Activated CD4-positive, alpha-beta memory T cell treated with anti-CD3 and anti-CD28 coated beads, Interleukin-2, amount 10 ng/mL, durations not matched to agents 7 days and 5 days (primary cell): ENCODE measurements at regions of chr7 and their contacts with region 1.

Region 1: GRCh38 chr7:108497082-108497725 is 28.7 kb downstream of the PNPLA8 start:
- DNase-seq: peak; percentile 35
- H3K4me3 Mint-ChIP-seq: no peak overlapping the region
- H3K27ac Mint-ChIP-seq: no peak overlapping the region
- H3K4me1 Mint-ChIP-seq: no peaks in the 10 kb centered on the region
- H3K27me3 Mint-ChIP-seq: no peaks in the 10 kb centered on the region

Region 2: GRCh38 chr7:108181073-108181985 is 315.9 kb before region 1 on chr7:
- CTCF ChIA-PET with region 1: interaction called, 10 read pairs
- POLR2A ChIA-PET with region 1: no interaction called
- DNase-seq: no peak
- H3K4me3 Mint-ChIP-seq: no peak overlapping the region
- H3K27ac Mint-ChIP-seq: no peak overlapping the region
- H3K4me1 Mint-ChIP-seq: no peaks in the 10 kb centered on the region
- H3K27me3 Mint-ChIP-seq: peaks cover 6% of the 10 kb centered on the region

Region 3: GRCh38 chr7:108452722-108453121 is 44.5 kb before region 1 on chr7:
- CTCF ChIA-PET with region 1: interaction called, 27 read pairs
- POLR2A ChIA-PET with region 1: no interaction called
- DNase-seq: no peak
- H3K4me3 Mint-ChIP-seq: no peak overlapping the region
- H3K27ac Mint-ChIP-seq: no peak overlapping the region
- H3K4me1 Mint-ChIP-seq: peaks cover 10% of the 10 kb centered on the region
- H3K27me3 Mint-ChIP-seq: peaks cover 69% of the 10 kb centered on the region

Region 4: GRCh38 chr7:108486291-108486966 is 10.8 kb before region 1 on chr7:
- CTCF ChIA-PET with region 1: interaction called, 15 read pairs
- POLR2A ChIA-PET with region 1: no interaction called
- DNase-seq: no peak
- H3K4me3 Mint-ChIP-seq: no peak overlapping the region
- H3K27ac Mint-ChIP-seq: no peak overlapping the region
- H3K4me1 Mint-ChIP-seq: no peaks in the 10 kb centered on the region
- H3K27me3 Mint-ChIP-seq: no peaks in the 10 kb centered on the region

Region 5: DNA sequence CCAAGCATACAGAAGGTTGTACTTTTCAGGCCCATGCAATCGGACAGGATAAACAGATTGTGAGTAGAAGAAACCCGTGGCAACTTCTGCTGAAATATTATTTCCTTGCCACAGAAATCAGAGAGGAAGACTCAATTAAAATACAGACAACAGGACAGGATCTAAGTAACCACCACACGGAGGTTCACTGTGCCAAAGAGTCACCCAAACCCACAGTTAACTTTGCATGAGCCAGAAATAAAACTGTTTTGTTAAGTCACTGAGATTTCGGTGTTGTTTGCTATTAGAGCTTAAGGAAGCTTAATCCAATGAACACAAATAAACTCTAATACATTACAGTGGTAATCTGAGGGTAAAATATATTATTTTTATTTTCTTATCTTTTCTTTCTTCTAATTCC is 14.7 kb after region 1 on chr7:
- CTCF ChIA-PET with region 1: interaction called, 11 read pairs
- POLR2A ChIA-PET with region 1: no interaction called
- DNase-seq: no peak
- H3K4me3 Mint-ChIP-seq: no peak overlapping the region
- H3K27ac Mint-ChIP-seq: no peak overlapping the region
- H3K4me1 Mint-ChIP-seq: no peaks in the 10 kb centered on the region
- H3K27me3 Mint-ChIP-seq: no peaks in the 10 kb centered on the region